Activated CD4-positive, alpha-beta memory T cell treated with anti-CD3 and anti-CD28 coated beads for 36 hours (primary cell): ENCODE measurements at regions of chr5 and their contacts with region 1.

Region 1: DNA sequence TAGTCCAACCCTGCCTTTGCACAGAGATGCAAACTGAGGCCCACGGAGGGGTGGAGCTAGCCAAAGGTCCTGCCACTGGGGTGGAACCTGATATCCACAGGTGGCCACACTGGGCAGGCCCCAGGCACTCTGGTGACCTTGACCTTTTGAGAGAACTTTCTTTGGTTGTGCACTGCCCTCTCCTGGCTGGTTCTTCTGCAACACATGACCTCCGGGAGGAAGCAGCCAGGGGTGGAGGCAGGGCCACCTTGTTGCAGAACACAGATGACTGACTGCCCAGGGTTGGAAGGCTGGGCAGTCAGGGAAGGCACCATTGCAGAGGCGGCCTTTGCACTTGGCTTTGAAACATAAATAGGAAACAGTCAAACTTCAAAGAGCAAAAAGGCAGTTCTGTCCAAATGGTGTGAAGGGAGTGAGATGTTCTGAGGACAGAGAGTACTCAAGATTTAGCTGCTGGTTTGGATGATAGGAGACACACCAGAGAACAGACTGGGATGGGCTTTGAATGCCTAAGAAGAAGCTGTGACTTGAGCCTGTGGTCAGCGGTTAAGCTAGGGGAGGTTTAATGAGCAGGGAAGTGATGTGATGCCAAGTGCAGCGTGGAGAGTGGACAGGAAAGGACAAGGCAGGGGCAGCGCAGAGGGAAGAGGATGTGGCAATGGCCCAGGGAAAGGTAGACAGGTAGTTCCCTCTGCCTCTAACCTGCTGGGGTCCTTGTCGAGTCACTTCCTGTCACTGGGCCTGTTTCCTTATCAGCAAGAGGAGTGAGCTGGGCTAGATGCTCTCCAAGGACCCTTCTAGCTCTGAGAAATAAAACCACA is 6.8 kb upstream of the TCOF1 start:
- DNase-seq: peak; percentile 77
- H3K4me3 Mint-ChIP-seq: no peak overlapping the region
- H3K27ac Mint-ChIP-seq: peak overlapping the region; percentile 46
- H3K4me1 Mint-ChIP-seq: peaks cover 12% of the 10 kb centered on the region
- H3K27me3 Mint-ChIP-seq: no peaks in the 10 kb centered on the region

Region 2: DNA sequence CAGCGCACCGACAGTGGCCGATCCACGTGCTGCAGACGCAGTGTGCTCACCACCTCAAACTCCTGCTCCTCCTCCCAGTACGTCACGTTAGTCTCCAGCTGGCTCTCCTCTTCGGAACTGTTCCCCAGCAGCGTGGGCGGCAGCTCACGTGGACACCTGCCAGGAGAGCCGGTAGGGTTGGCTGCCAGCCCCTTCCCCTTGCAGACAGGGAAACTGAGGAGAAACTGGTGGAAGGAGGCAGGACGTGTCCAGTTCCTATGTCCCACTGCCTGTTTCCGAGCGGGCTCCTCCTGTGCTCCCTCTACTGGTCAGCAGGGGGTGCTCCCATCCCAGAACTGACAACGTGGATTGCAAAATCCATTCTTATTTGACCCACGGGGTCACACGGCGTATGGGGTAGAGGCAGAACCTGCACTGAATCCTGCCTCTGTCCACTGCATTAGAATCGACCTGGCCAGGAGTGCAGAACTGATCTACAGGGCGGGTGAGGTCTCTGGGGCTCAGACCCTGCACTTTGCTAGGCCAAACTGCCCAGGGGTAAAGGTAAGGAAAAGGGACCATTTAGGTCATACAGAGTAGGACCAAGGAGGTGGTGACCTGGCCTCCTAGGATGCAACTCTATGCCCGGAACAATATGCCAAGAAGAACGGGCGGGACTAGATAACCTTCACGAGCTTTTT is 220.8 kb before region 1 on chr5:
- CTCF ChIA-PET with region 1: interaction called, 11 read pairs
- POLR2A ChIA-PET with region 1: no interaction called
- intact Hi-C with region 1: no loop called
- DNase-seq: peak; percentile 68
- H3K4me3 Mint-ChIP-seq: no peak overlapping the region
- H3K27ac Mint-ChIP-seq: no peak overlapping the region
- H3K4me1 Mint-ChIP-seq: no peaks in the 10 kb centered on the region
- H3K27me3 Mint-ChIP-seq: no peaks in the 10 kb centered on the region

Region 3: DNA sequence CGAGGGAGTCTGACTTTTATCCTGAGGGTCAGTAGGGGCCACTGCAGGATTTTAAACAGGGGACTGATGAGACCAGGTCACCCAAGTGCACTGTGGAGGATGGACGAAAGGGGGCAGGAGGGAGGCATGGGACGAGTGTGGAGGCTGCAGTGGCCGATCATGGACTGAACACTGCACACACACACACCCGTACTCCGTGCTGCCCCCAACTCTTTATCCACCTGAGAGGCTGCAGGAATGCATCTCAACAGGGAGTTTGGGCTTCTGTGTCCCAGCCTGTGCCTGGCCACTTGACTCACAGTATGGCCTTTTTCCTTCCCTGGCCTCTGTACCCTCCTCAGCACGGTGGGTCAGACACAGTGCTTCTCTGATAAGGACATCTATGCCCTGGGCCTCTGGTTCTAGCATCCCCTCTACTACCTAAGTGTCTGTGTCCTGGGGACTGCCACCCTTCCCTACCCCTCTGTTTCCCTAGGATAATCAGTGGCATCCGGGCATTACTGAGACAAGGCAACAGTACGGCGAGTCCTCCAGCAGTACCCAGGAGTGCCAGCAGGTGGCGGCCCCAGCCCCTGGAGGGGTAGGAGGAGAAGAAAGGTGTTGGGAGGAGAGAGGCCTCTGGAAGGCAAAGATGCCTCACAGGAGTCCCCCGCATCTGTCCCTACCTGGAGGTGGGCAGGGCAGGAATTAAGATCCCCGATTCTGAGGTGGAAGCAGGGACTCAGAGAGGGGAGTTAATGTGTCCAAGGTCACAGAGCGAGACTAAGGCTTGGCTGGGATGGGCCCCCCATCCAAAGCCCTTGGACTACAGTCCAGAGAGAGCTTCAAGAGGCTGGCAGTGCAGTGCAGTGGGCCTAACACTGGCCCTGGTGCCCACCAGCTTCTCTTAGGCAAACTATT is 189.2 kb before region 1 on chr5:
- CTCF ChIA-PET with region 1: interaction called, 5 read pairs
- POLR2A ChIA-PET with region 1: no interaction called
- intact Hi-C with region 1: loop called (anchors 1 kb)
- DNase-seq: peak; percentile 84
- H3K4me3 Mint-ChIP-seq: no peak overlapping the region
- H3K27ac Mint-ChIP-seq: no peak overlapping the region
- H3K4me1 Mint-ChIP-seq: no peaks in the 10 kb centered on the region
- H3K27me3 Mint-ChIP-seq: peaks cover 20% of the 10 kb centered on the region

Region 4: GRCh38 chr5:150469718-150470469 is 119.2 kb after region 1 on chr5:
- CTCF ChIA-PET with region 1: no interaction called
- POLR2A ChIA-PET with region 1: no interaction called
- intact Hi-C with region 1: no loop called
- DNase-seq: no peak
- H3K4me3 Mint-ChIP-seq: no peak overlapping the region
- H3K27ac Mint-ChIP-seq: no peak overlapping the region
- H3K4me1 Mint-ChIP-seq: no peaks in the 10 kb centered on the region
- H3K27me3 Mint-ChIP-seq: no peaks in the 10 kb centered on the region

Region 5: GRCh38 chr5:150486402-150487198 is 135.9 kb after region 1 on chr5:
- CTCF ChIA-PET with region 1: no interaction called
- POLR2A ChIA-PET with region 1: no interaction called
- intact Hi-C with region 1: no loop called
- DNase-seq: peak; percentile 31
- H3K4me3 Mint-ChIP-seq: peak overlapping the region; percentile 41
- H3K27ac Mint-ChIP-seq: no peak overlapping the region
- H3K4me1 Mint-ChIP-seq: peaks cover 7% of the 10 kb centered on the region
- H3K27me3 Mint-ChIP-seq: peaks cover 16% of the 10 kb centered on the region